AG04450 (cell line): ENCODE measurements at regions of chr10 and their contacts with region 1.

Region 1: DNA sequence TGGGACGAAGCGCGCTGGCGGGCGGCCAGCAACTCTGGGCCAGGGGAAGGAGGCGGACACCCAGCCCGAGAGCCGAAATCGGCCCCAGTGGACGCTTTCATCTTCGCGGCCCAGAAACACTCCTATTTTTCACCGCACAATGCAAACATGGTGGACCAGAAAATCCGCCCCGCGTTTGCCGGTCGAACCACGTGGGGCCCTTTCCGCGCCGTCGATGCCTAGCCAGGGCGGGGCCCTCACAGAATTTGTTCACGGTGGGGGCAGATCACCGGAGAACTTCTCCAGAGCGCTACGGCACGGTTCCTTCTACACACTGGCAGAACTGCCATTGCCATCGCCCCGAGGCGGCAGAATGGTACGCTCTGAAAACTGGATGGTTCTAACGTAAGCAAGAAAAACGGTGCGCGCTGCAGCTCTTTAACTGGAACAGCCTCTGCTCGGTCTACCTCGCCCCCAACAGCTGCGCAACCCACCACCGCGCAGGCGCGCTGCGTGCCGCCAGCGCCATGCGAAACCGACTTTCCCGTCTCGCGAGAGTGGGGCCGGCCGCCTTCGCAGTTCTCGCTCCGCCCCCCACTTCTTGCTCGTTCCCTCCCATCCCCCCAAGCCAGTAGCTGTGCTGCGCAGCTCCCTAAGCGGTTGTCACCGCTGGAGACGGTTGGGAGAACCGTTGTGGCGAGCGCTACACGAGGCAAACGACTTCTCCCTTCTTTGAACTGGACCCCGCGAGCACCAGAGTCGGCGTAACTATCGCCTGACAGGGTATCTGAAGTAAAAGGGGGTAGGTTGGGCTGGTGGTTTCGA is at the start of gene HNRNPH3:
- DNase-seq: peak; percentile 95
- H3K4me3 ChIP-seq: peak within 1 kb of the TSS; percentile 88
- H3K27ac ChIP-seq: peak within 1 kb of the TSS; percentile 94
- H3K27me3 ChIP-seq: no peaks in the 10 kb centered on the region
- CTCF ChIP-seq: no peak
- polyA plus RNA-seq, gene HNRNPH3: 87.8 and 113 TPM in 2 replicates

Region 2: GRCh38 chr10:68342909-68343516 is 11.4 kb after region 1 on chr10:
- CTCF ChIA-PET with region 1: interaction called, 16 read pairs
- POLR2A ChIA-PET with region 1: interaction called, 13 read pairs
- DNase-seq: no peak
- H3K4me3 ChIP-seq: no peak overlapping the region
- H3K27ac ChIP-seq: no peak overlapping the region
- H3K27me3 ChIP-seq: no peaks in the 10 kb centered on the region
- CTCF ChIP-seq: no peak

Region 3: DNA sequence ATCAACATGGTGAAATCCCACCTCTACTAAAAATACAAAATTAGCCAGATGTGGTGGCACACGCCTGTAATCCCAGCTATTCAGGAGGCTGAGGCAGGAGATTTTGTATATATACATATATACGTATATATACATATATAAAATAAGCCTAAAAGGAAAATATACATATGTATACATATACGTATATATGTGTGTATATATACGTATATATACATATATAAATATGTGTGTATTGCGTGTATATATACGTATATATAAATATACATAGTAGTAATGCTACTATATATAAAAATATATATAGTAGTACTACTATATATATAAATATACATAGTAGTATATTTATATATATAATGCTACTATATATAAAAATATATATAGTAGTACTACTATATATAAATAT is 27.5 kb after region 1 on chr10:
- CTCF ChIA-PET with region 1: no interaction called
- POLR2A ChIA-PET with region 1: no interaction called
- DNase-seq: no peak
- H3K4me3 ChIP-seq: no peak overlapping the region
- H3K27ac ChIP-seq: no peak overlapping the region
- H3K27me3 ChIP-seq: no peaks in the 10 kb centered on the region
- CTCF ChIP-seq: no peak